ENCODE measurements at regions of chrX and their contacts with region 1.

Region 1: DNA sequence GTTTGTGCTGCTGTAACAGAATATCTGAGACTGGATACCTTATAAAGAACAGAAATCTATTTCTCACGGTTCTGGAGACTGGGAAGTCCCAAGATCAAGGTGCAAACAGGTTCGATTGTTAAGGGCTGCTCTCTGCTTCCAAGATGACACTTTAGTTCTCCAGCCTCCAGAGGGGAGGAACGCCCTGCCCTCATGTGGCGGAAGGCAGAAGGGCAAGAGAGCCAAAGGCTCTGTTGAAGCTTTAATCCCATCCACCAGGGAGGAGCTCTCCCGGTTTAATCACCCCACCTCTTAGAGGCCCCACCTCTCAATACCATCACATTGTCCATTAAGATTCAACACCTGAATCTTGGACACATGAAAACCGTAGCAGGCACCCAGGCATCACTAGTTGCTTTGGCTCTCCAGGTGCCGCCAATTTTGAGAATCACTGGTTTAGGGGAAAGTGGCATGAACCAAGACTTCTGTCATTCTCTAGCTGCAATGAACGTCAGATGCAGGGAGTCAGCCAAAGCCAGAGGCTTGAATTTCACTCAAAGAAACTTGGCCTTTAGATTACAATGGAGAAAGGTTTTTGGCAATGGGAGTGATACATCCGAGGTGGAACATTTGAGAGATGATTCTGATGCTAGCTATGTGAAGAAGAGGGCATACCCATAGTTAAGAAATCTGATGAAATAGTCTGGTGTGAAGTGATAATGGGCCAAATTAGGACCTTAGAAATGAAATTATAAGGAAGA is 15.7 kb downstream of the FHL1 start:
- DNase-seq: peak in 1 of 2 donors; percentile 51
- ATAC-seq: peak; percentile 61 to 79
- H3K4me3 ChIP-seq: no peak overlapping the region
- H3K27ac ChIP-seq: peak overlapping the region; percentile 10 to 35 (median 16)
- H3K4me1 ChIP-seq: peaks cover 6 to 8% of the 10 kb centered on the region in 2 donors
- H3K27me3 ChIP-seq: no peaks in the 10 kb centered on the region
- CTCF ChIP-seq: peak; percentile 51 to 75 (median 74)
- POLR2A ChIP-seq: no peak

Region 2: GRCh38 chrX:136214551-136214950 is 51.5 kb after region 1 on chrX:
- in situ Hi-C with region 1: loop called in 1 of 4 experiments (anchors 10 kb)
- intact Hi-C with region 1: no loop called
- DNase-seq: no peak
- ATAC-seq: no peak
- H3K4me3 ChIP-seq: no peak overlapping the region
- H3K27ac ChIP-seq: peak overlapping the region in 2 of 4 donors; percentile 31 to 92
- H3K4me1 ChIP-seq: no peaks in the 10 kb centered on the region
- H3K27me3 ChIP-seq: no peaks in the 10 kb centered on the region
- CTCF ChIP-seq: no peak
- POLR2A ChIP-seq: no peak

Region 3: DNA sequence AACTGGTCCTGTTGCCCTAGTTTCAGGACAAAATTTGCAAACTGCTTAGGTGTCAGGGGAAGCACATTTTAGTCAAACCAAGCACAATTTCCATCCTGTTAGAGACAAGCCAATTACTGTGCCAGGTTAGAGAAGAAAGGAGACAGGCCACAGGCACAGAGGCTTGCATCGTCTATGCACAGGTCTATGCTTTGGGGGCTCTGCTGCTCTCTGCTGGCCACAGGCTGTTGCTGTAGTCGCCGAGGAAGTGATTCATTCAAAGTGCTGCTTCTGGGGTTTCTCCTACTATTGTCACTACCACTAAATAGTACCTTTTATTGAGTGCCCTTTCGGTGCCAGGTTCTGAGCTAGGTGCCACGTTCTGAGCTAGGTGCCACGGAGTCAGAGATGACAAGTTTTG is 414.6 kb after region 1 on chrX:
- in situ Hi-C with region 1: no loop called
- intact Hi-C with region 1: loop called (anchors 10 kb)
- DNase-seq: peak; percentile 3 to 17
- ATAC-seq: peak; percentile 70 to 72
- H3K4me3 ChIP-seq: no peak overlapping the region
- H3K27ac ChIP-seq: no peak overlapping the region
- H3K4me1 ChIP-seq: no peaks in the 10 kb centered on the region
- H3K27me3 ChIP-seq: no peaks in the 10 kb centered on the region
- CTCF ChIP-seq: peak; percentile 15 to 63 (median 41)
- POLR2A ChIP-seq: no peak

Measured in gastrocnemius medialis (tissue), 4 donors.